ENCODE measurements at regions of chr6 and their contacts with region 1.

Region 1: GRCh38 chr6:154733012-154733625 is at the start of gene SCAF8:
- DNase-seq: peak; percentile 94
- ATAC-seq: peak; percentile 77
- H3K4me3 Mint-ChIP-seq: peak within 1 kb of the TSS; percentile 89
- H3K27ac Mint-ChIP-seq: peak within 1 kb of the TSS; percentile 98
- H3K4me1 Mint-ChIP-seq: peaks cover 41% of the 10 kb centered on the region
- H3K27me3 Mint-ChIP-seq: no peaks in the 10 kb centered on the region
- CTCF ChIP-seq: no peak
- total RNA-seq, gene SCAF8: 56.8 and 65.2 TPM in 2 replicates

Region 2: DNA sequence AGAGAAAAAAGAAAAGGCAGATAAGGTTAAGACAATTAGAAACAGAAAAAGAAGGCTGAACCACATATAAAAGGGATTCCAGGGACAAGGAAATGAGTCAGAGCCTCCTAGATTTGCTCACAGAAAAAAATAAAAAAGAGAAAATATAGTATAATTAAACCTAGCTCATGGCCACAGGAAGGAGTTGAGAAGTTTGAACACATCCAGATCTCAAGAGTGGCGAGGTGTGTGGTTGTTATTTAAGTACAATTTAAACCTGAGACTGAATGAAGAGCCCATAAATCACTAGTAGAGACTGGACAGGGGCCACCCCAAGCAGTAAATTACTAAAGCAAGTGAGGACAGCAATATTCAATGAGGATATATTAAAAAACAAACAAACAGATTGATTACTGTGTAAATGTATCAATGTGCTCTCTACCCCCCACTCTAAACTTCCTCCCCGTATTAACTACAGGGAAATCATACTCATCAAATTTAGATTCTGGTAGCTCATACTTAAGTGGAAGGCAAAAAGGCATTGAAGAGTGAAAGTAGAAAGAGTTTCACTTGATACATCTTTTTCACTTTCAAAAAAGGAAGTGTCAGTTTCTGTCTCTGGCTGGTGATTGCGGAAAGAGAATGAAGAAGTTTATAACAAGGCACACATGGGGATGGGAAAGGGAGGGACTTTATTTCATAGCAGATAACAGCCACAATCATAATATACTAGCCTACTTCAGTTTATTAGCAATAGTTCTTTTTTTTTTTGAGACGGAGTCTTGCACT is 49.2 kb before region 1 on chr6:
- CTCF ChIA-PET with region 1: no interaction called
- POLR2A ChIA-PET with region 1: interaction called, 3 read pairs
- intact Hi-C with region 1: loop called (anchors 1 kb)
- DNase-seq: no peak
- ATAC-seq: peak; percentile 89
- H3K4me3 Mint-ChIP-seq: peak overlapping the region; percentile 46
- H3K27ac Mint-ChIP-seq: peak overlapping the region; percentile 92
- H3K4me1 Mint-ChIP-seq: peaks cover 44% of the 10 kb centered on the region
- H3K27me3 Mint-ChIP-seq: no peaks in the 10 kb centered on the region
- CTCF ChIP-seq: no peak

Region 3: GRCh38 chr6:154800338-154800737 is 67.2 kb after region 1 on chr6:
- CTCF ChIA-PET with region 1: interaction called, 3 read pairs
- POLR2A ChIA-PET with region 1: interaction called, 7 read pairs
- intact Hi-C with region 1: loop called (anchors 1 kb)
- DNase-seq: no peak
- ATAC-seq: peak; percentile 76
- H3K4me3 Mint-ChIP-seq: peak overlapping the region; percentile 12
- H3K27ac Mint-ChIP-seq: peak overlapping the region; percentile 85
- H3K4me1 Mint-ChIP-seq: peaks cover 16% of the 10 kb centered on the region
- H3K27me3 Mint-ChIP-seq: no peaks in the 10 kb centered on the region
- CTCF ChIP-seq: no peak

Region 4: GRCh38 chr6:154814063-154814462 is 80.9 kb after region 1 on chr6:
- CTCF ChIA-PET with region 1: no interaction called
- POLR2A ChIA-PET with region 1: no interaction called
- intact Hi-C with region 1: loop called (anchors 1 kb)
- DNase-seq: no peak
- ATAC-seq: peak; percentile 39
- H3K4me3 Mint-ChIP-seq: peak overlapping the region; percentile 13
- H3K27ac Mint-ChIP-seq: peak overlapping the region; percentile 64
- H3K4me1 Mint-ChIP-seq: peaks cover 45% of the 10 kb centered on the region
- H3K27me3 Mint-ChIP-seq: no peaks in the 10 kb centered on the region
- CTCF ChIP-seq: no peak

Region 5: DNA sequence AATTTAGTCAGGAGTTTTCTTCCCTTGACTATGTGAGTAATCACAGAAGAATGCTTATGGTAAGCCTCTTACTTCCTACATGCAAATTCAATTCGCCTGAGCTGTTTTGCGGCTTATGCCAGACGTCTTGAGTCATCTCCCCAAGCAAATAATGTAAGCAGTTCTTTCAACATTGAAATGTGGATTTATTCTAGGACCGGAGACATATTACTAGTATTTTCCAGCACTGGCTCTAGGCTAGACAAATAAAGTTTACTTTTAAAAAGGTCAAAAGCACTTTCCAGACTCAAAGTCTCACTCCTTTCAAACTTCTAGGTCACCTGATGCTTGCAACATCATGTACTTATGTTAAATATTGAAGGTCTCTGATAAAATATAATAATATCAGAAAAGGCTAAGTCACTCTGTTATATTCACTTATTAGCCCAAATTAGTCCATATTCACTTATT is 760.6 kb after region 1 on chr6:
- CTCF ChIA-PET with region 1: no interaction called
- POLR2A ChIA-PET with region 1: no interaction called
- intact Hi-C with region 1: no loop called
- DNase-seq: no peak
- ATAC-seq: peak; percentile 68
- H3K4me3 Mint-ChIP-seq: no peak overlapping the region
- H3K27ac Mint-ChIP-seq: no peak overlapping the region
- H3K4me1 Mint-ChIP-seq: peaks cover 9% of the 10 kb centered on the region
- H3K27me3 Mint-ChIP-seq: peaks cover 8% of the 10 kb centered on the region
- CTCF ChIP-seq: no peak

Measured in activated B cell treated with CpG ODN at 0.5 μM for 24 hours (primary cell).